B cell (primary cell): ENCODE measurements at regions of chr3 and their contacts with region 1.

Region 1: GRCh38 chr3:18758047-18758704 is 333.0 kb upstream of the SATB1 start:
- DNase-seq: peak; percentile 84
- ATAC-seq: peak; percentile 88
- H3K4me3 ChIP-seq: no peak overlapping the region
- H3K4me3 Mint-ChIP-seq: no peak overlapping the region
- H3K27ac ChIP-seq: no peak overlapping the region
- H3K27ac Mint-ChIP-seq: no peak overlapping the region
- H3K4me1 ChIP-seq: no peaks in the 10 kb centered on the region
- H3K4me1 Mint-ChIP-seq: no peaks in the 10 kb centered on the region
- H3K27me3 ChIP-seq: no peaks in the 10 kb centered on the region
- H3K27me3 Mint-ChIP-seq: no peaks in the 10 kb centered on the region
- CTCF ChIP-seq: peak; percentile 87

Region 2: DNA sequence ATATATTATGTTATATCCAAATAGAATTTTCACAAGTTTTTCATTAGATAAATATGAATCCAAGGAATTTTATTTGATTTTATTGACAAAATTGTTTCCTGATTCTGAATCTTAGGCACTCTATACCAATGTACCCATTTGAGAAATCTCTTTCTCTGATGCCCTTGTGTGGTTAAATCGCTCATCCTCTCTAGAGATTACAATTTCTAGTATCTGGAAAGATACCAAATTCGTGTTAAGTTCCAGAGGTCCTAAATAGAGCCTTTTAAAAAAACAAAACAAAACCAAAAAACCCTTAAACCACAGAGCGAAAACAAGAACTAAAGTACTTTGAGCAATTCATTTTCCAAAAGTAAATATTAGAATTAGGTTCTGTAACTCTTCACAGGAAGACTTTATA is 353.0 kb before region 1 on chr3:
- CTCF ChIA-PET with region 1: interaction called, 4 read pairs
- POLR2A ChIA-PET with region 1: no interaction called
- intact Hi-C with region 1: loop called (anchors 5 kb)
- DNase-seq: no peak
- ATAC-seq: no peak
- H3K4me3 ChIP-seq: no peak overlapping the region
- H3K4me3 Mint-ChIP-seq: no peak overlapping the region
- H3K27ac ChIP-seq: no peak overlapping the region
- H3K27ac Mint-ChIP-seq: no peak overlapping the region
- H3K4me1 ChIP-seq: no peaks in the 10 kb centered on the region
- H3K4me1 Mint-ChIP-seq: peaks cover 5% of the 10 kb centered on the region
- H3K27me3 ChIP-seq: no peaks in the 10 kb centered on the region
- H3K27me3 Mint-ChIP-seq: no peaks in the 10 kb centered on the region
- CTCF ChIP-seq: no peak